Aorta (tissue), 5 donors: ENCODE measurements at regions of chr3 and their contacts with region 1.

Region 1: GRCh38 chr3:56682462-56683121 is 473 bp downstream of the TASOR start:
- DNase-seq: peak; percentile 81 to 90
- ATAC-seq: peak; percentile 89
- H3K4me3 ChIP-seq: peak overlapping the region; percentile 67 to 78
- H3K27ac ChIP-seq: peak overlapping the region; percentile 65 to 80
- H3K4me1 ChIP-seq: no peaks in the 10 kb centered on the region
- H3K27me3 ChIP-seq: no peaks in the 10 kb centered on the region

Region 2: DNA sequence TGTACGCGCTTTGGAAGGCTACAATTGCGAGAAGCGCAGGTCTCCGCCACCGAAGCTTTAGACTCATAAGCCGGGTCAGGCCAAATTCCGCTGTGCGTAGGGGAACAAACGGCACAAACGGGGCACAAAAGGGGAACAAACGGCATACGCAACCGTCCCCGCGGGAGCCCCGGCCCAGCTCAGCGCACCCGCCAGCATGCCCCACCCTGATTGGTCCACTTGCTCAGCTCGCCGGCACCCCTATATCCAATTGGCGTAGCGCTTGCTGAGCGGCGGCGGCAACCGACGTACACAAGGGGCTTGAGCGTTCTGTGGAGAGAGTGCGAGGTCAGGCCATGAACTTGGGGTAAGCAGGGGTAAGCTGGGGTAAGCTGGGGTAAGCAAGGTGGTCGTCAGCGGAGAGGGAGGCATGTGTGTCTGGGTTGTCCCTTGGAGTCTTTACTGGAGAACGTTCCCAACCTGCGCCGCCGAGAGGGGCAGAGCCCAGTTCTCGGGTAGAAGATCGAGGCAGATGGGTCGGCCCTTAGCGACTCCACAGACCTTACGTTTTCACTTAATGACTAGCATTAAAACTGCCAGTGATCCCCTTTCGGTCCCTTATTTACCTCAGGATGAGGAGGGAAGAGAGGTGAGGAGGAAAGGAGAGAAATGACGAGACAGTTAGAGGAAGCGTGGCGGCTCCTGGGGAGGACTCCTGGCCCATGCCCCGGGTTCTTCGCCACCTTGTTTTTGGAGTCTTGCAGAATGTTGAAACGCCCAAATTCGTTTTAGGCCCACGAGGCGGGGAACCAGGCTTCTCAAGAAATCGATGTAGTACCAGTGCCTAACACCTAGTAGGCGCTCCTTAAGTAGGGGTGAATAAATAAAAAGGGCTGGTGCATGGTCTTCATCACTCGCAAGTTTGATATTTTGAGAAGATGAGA is 125.4 kb before region 1 on chr3 and contains the start of gene CCDC66:
- intact Hi-C with region 1: loop called in 1 of 2 experiments (anchors 5 kb)
- DNase-seq: peak; percentile 98 to 99
- ATAC-seq: peak; percentile 100
- H3K4me3 ChIP-seq: peak within 1 kb of the TSS; percentile 76 to 85
- H3K27ac ChIP-seq: peak within 1 kb of the TSS; percentile 6 to 90
- H3K4me1 ChIP-seq: peaks cover 0 to 3% of the 10 kb centered on the region in 2 donors
- H3K27me3 ChIP-seq: no peaks in the 10 kb centered on the region
- total RNA-seq, gene CCDC66: 27.1 to 51.5 TPM

Region 3: GRCh38 chr3:57078344-57078634 is 395.7 kb after region 1 on chr3:
- intact Hi-C with region 1: loop called in 1 of 2 experiments (anchors 10 kb)
- DNase-seq: peak; percentile 76 to 83
- ATAC-seq: peak; percentile 43
- H3K4me3 ChIP-seq: peak overlapping the region; percentile 20 to 57
- H3K27ac ChIP-seq: no peak overlapping the region
- H3K4me1 ChIP-seq: no peaks in the 10 kb centered on the region
- H3K27me3 ChIP-seq: no peaks in the 10 kb centered on the region